ENCODE measurements at regions of chr6 and their contacts with region 1.

Region 1: GRCh38 chr6:159693128-159693893 is at the start of gene SOD2:
- DNase-seq: peak; percentile 94
- ATAC-seq: peak; percentile 76
- H3K4me3 ChIP-seq: peak within 1 kb of the TSS; percentile 62 to 89 (median 79)
- H3K4me3 Mint-ChIP-seq: peak within 1 kb of the TSS; percentile 93
- H3K27ac ChIP-seq: peak within 1 kb of the TSS; percentile 71 to 89
- H3K27ac Mint-ChIP-seq: peak within 1 kb of the TSS; percentile 96
- H3K4me1 ChIP-seq: peaks cover 28 to 34% of the 10 kb centered on the region in 2 donors
- H3K4me1 Mint-ChIP-seq: peaks cover 30% of the 10 kb centered on the region
- H3K27me3 ChIP-seq: no peaks in the 10 kb centered on the region
- H3K27me3 Mint-ChIP-seq: no peaks in the 10 kb centered on the region
- CTCF ChIP-seq: no peak
- total RNA-seq, gene SOD2: 94.7 and 97.6 TPM in 2 replicates

Region 2: GRCh38 chr6:159720708-159721107 is 27.4 kb after region 1 on chr6:
- CTCF ChIA-PET with region 1: interaction called, 10 read pairs
- POLR2A ChIA-PET with region 1: interaction called, 58 read pairs
- intact Hi-C with region 1: no loop called
- DNase-seq: peak; percentile 77
- ATAC-seq: peak; percentile 57
- H3K4me3 ChIP-seq: no peak overlapping the region
- H3K4me3 Mint-ChIP-seq: no peak overlapping the region
- H3K27ac ChIP-seq: no peak overlapping the region
- H3K27ac Mint-ChIP-seq: no peak overlapping the region
- H3K4me1 ChIP-seq: peaks cover 0 to under 1% of the 10 kb centered on the region in 2 donors
- H3K4me1 Mint-ChIP-seq: peaks cover under 1% of the 10 kb centered on the region
- H3K27me3 ChIP-seq: no peaks in the 10 kb centered on the region
- H3K27me3 Mint-ChIP-seq: no peaks in the 10 kb centered on the region
- CTCF ChIP-seq: peak; percentile 77

Region 3: DNA sequence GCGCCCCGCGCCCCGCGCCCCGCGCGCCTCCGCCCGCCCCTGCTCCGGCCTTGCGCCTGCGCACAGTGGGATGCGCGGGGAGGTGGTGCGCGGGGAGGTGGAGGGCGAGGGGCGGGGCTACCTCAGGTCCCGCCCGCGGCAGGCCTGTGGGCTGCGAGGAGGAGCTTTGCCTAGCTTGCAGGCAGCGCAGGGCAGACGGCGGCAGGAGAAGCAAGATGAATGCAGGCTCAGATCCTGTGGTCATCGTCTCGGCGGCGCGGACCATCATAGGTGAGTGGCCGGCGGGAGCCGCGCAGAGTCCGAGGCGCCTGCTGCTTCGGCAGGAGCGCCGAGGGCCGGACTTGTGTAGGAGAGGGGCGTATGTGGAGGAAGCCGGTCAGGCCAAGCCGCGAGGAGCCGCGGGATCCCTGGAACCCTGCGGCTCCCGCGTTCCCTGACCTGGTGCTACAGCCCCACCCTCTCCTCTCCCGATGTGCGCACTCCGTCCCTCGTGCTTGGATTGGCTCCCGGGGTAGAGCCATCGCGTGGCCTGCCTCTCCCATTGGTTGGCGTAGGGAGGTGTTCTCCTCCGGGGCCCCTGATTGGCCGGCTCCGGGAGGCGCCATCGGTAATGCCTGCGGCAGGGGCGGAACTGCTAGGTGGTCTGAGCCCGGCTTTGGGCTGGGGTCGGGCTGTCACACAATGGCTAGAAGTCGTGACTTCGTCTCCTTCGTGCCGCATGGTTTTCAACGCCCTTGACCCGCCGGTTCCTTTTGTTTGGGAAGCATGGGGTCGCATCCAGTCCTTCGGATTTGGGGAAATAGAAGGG is 68.8 kb after region 1 on chr6 and contains the start of gene ACAT2:
- CTCF ChIA-PET with region 1: interaction called, 5 read pairs
- POLR2A ChIA-PET with region 1: interaction called, 8 read pairs
- intact Hi-C with region 1: loop called (anchors 1 kb)
- DNase-seq: peak; percentile 94
- ATAC-seq: peak; percentile 96
- H3K4me3 ChIP-seq: peak within 1 kb of the TSS; percentile 83 to 99 (median 93)
- H3K4me3 Mint-ChIP-seq: peak within 1 kb of the TSS; percentile 95
- H3K27ac ChIP-seq: peak within 1 kb of the TSS; percentile 95 to 96
- H3K27ac Mint-ChIP-seq: peak within 1 kb of the TSS; percentile 96
- H3K4me1 ChIP-seq: peaks cover 17 to 19% of the 10 kb centered on the region in 2 donors
- H3K4me1 Mint-ChIP-seq: peaks cover 21% of the 10 kb centered on the region
- H3K27me3 ChIP-seq: no peaks in the 10 kb centered on the region
- H3K27me3 Mint-ChIP-seq: no peaks in the 10 kb centered on the region
- CTCF ChIP-seq: no peak
- total RNA-seq, gene ACAT2: 31.1 and 32.6 TPM in 2 replicates

Region 4: GRCh38 chr6:159852877-159853276 is 159.6 kb after region 1 on chr6:
- CTCF ChIA-PET with region 1: interaction called, 8 read pairs
- POLR2A ChIA-PET with region 1: no interaction called
- intact Hi-C with region 1: loop called (anchors 1 kb)
- DNase-seq: peak; percentile 15
- ATAC-seq: no peak
- H3K4me3 ChIP-seq: no peak overlapping the region
- H3K4me3 Mint-ChIP-seq: no peak overlapping the region
- H3K27ac ChIP-seq: no peak overlapping the region
- H3K27ac Mint-ChIP-seq: no peak overlapping the region
- H3K4me1 ChIP-seq: no peaks in the 10 kb centered on the region
- H3K4me1 Mint-ChIP-seq: no peaks in the 10 kb centered on the region
- H3K27me3 ChIP-seq: peaks cover 0 to 2% (median 0%) of the 10 kb centered on the region in 4 experiments
- H3K27me3 Mint-ChIP-seq: peaks cover 10% of the 10 kb centered on the region
- CTCF ChIP-seq: peak; percentile 14

Region 5: DNA sequence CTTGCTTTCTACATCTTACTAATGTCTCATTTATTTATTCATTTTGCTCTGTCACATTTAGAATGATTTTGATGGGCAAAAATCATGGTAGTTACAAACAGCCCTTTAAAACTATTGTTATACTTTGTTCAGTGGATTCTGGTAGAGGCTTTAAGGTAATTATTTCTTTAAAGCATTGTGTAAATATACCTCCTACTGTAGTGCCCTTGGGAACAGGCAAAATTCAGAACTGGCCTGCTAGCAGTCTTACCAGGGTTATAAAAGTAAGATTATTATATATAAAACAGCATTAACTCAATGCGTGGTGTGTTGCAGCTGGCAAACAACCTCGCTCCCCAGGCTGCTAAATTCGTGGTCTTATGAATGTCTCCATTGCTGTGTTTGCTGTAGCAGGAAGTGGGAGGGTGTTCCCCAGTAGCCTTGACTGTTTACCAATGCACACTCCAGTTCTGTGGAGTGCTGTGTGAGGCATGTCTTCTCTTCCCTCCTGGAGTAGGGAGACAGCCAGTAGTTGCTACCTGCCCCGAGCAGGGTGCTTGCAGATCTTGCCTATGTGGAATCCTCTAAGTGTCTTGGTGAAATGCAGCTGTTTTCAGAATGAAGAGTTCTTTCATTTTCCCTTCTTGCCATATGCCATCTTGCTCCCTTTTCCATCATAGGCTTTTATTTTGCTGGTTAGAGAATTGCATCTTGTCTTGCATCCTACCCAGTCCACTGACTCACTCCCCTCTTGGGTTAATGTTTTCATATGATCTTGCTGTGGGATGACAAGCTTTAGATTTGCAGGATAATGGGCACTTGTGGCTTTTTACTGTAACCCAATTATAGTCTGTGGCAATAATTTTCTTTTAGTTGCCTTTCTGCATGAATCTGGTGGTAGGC is 320.9 kb after region 1 on chr6:
- CTCF ChIA-PET with region 1: no interaction called
- POLR2A ChIA-PET with region 1: no interaction called
- intact Hi-C with region 1: no loop called
- DNase-seq: no peak
- ATAC-seq: no peak
- H3K4me3 ChIP-seq: no peak overlapping the region
- H3K4me3 Mint-ChIP-seq: no peak overlapping the region
- H3K27ac ChIP-seq: no peak overlapping the region
- H3K27ac Mint-ChIP-seq: no peak overlapping the region
- H3K4me1 ChIP-seq: peaks cover 0 to 19% of the 10 kb centered on the region in 2 donors
- H3K4me1 Mint-ChIP-seq: peaks cover 11% of the 10 kb centered on the region
- H3K27me3 ChIP-seq: no peaks in the 10 kb centered on the region
- H3K27me3 Mint-ChIP-seq: no peaks in the 10 kb centered on the region
- CTCF ChIP-seq: no peak

Region 6: DNA sequence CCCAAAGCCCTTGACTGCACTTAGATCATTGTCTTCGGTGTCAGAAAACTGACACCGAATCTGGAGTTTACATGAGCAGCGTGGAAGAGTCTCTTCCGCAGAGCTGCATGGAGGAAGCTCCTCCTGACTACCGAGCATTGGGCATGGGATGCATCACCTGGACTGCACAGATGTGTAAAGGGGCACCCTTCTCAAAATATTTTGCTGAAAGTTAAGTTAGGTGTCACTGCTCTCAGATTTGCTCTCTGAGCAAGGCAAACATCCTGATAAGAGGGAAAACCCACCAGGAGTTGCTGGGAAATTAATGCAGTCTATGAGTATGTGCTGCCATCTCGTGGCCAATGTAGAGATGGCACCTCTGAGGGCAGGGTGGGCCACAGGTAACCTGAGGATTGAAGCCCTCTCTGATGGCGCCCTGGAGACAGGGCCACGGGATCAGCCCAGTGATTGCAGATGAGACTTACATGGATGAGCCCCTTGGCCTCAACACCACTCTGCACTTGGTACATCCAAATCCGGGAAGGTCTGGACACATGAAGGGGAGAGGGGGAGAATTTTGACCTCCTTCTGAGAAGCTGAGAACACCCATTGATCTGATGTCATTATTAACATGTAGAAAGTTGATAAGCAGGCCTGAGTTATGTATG is 840.9 kb after region 1 on chr6:
- CTCF ChIA-PET with region 1: no interaction called
- POLR2A ChIA-PET with region 1: no interaction called
- intact Hi-C with region 1: loop called (anchors 2 kb)
- DNase-seq: peak; percentile 68
- ATAC-seq: peak; percentile 65
- H3K4me3 ChIP-seq: no peak overlapping the region
- H3K4me3 Mint-ChIP-seq: no peak overlapping the region
- H3K27ac ChIP-seq: no peak overlapping the region
- H3K27ac Mint-ChIP-seq: no peak overlapping the region
- H3K4me1 ChIP-seq: peaks cover 4 to 6% of the 10 kb centered on the region in 2 donors
- H3K4me1 Mint-ChIP-seq: no peaks in the 10 kb centered on the region
- H3K27me3 ChIP-seq: peaks cover 0 to 6% (median 4%) of the 10 kb centered on the region in 4 experiments
- H3K27me3 Mint-ChIP-seq: peaks cover 19% of the 10 kb centered on the region
- CTCF ChIP-seq: peak; percentile 99